Sciatic nerve (tissue), 2 donors: ENCODE measurements at regions of chr11 and their contacts with region 1.

Region 1: DNA sequence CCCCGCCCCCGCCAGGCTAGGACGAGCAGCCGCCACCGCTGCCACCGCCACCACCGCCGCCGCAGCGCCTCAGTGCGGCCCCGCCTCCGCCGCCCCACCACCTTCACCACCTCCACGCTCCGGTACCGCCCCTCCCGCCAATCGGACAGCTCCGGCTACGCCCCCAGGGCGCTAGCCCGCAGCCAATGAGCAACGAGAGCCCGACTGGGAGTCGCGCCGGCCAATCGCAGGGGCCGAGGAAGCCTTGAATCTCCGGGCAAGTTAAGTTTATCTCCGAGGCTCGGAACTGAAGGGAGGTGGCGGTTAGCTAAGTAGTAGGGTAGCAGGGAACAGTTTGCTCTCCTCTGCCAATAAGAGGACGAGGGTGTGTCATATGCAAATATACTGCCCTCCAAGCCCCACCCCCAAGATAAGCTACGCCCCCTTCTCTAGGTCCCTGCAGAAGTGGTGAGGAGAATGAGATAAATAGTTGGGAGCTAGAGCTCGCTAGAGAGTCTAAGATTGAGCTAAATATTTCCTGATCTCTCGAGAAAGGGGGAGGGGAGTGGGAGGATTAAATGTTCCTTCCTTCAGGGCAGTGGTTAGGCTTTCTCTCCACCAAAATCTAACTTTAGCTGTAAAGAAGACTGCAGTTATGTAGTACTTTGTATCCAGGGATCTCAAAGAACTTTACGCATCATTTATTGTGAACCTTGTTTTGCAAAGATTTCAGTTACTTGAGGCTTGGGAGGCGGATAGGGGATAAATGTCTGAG is at the start of gene SESN3:
- DNase-seq: peak; percentile 99
- ATAC-seq: peak; percentile 98
- total RNA-seq, gene SESN3: 205 TPM

Region 2: DNA sequence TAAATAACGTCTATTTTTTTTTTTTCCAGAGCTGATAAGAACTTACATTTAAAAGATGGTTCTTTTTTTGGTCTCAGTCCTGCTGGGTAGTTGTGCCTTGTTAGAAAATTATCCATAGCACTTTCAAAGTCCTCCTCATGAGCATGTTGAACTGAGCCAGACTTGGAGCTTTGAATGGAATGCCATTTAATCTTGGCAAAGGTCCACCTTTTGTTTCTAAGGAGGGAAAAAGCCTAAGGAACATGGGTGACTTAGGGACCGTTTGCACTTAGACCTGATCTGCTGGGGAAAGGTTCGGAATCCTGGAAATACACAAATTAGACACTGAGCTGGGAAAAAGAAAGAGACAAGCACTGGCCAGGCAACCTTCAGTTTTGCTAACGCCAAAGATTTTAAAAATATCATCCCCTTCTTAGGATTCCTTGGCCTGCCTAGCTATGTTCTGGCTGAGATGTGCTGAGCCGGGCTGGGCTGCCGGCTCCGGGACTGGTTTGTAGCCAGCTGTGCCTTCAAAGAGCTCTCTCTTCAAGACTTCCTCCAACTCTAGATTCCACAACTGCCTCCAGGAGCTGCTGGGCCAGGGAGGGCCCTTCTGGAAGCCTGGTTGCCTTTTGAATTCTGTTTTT is 74.3 kb before region 1 on chr11:
- intact Hi-C with region 1: loop called (anchors 5 kb)
- DNase-seq: peak; percentile 65
- ATAC-seq: peak; percentile 83